ENCODE measurements at regions of chr11 and their contacts with region 1.

Region 1: GRCh38 chr11:126585781-126586491 is 230.4 kb downstream of the ST3GAL4 start:
- DNase-seq: peak; percentile 93
- H3K4me3 ChIP-seq: no peak overlapping the region
- H3K27ac ChIP-seq: peak overlapping the region; percentile 43
- H3K4me1 ChIP-seq: peaks cover 10% of the 10 kb centered on the region
- H3K27me3 ChIP-seq: no peaks in the 10 kb centered on the region
- CTCF ChIP-seq: no peak

Region 2: GRCh38 chr11:126303623-126304456 is 282.1 kb before region 1 on chr11 and contains the start of gene DCPS:
- CTCF ChIA-PET with region 1: no interaction called
- dilution Hi-C with region 1: no loop called
- in situ Hi-C with region 1: no loop called
- intact Hi-C with region 1: no loop called
- DNase-seq: peak; percentile 92
- H3K4me3 ChIP-seq: peak within 1 kb of the TSS; percentile 72 to 88 (median 88)
- H3K27ac ChIP-seq: peak within 1 kb of the TSS; percentile 90
- H3K4me1 ChIP-seq: peaks cover 26% of the 10 kb centered on the region
- H3K27me3 ChIP-seq: no peaks in the 10 kb centered on the region
- CTCF ChIP-seq: no peak
- total RNA-seq, gene DCPS: 16.5 to 29.0 TPM

Region 3: GRCh38 chr11:126485021-126485792 is 100.7 kb before region 1 on chr11:
- CTCF ChIA-PET with region 1: no interaction called
- dilution Hi-C with region 1: no loop called
- in situ Hi-C with region 1: no loop called
- intact Hi-C with region 1: no loop called
- DNase-seq: peak; percentile 14
- H3K4me3 ChIP-seq: no peak overlapping the region
- H3K27ac ChIP-seq: no peak overlapping the region
- H3K4me1 ChIP-seq: peaks cover 4% of the 10 kb centered on the region
- H3K27me3 ChIP-seq: no peaks in the 10 kb centered on the region
- CTCF ChIP-seq: peak in 1 of 2 donors; percentile 23

Region 4: GRCh38 chr11:127288926-127289325 is 703.0 kb after region 1 on chr11:
- CTCF ChIA-PET with region 1: interaction called, 11 read pairs
- dilution Hi-C with region 1: no loop called
- in situ Hi-C with region 1: no loop called
- intact Hi-C with region 1: no loop called
- DNase-seq: no peak
- H3K4me3 ChIP-seq: no peak overlapping the region
- H3K27ac ChIP-seq: no peak overlapping the region
- H3K4me1 ChIP-seq: no peaks in the 10 kb centered on the region
- H3K27me3 ChIP-seq: peaks cover 2% of the 10 kb centered on the region
- CTCF ChIP-seq: no peak